Colonic mucosa (tissue), 4 donors: ENCODE measurements at regions of chr7 and their contacts with region 1.

Region 1: GRCh38 chr7:114539575-114539974 is 125.0 kb downstream of the FOXP2 start:
- DNase-seq: peak; percentile 21
- H3K4me3 ChIP-seq: no peak overlapping the region
- H3K27ac ChIP-seq: no peak overlapping the region
- H3K4me1 ChIP-seq: no peaks in the 10 kb centered on the region
- H3K27me3 ChIP-seq: no peaks in the 10 kb centered on the region
- CTCF ChIP-seq: no peak

Region 2: DNA sequence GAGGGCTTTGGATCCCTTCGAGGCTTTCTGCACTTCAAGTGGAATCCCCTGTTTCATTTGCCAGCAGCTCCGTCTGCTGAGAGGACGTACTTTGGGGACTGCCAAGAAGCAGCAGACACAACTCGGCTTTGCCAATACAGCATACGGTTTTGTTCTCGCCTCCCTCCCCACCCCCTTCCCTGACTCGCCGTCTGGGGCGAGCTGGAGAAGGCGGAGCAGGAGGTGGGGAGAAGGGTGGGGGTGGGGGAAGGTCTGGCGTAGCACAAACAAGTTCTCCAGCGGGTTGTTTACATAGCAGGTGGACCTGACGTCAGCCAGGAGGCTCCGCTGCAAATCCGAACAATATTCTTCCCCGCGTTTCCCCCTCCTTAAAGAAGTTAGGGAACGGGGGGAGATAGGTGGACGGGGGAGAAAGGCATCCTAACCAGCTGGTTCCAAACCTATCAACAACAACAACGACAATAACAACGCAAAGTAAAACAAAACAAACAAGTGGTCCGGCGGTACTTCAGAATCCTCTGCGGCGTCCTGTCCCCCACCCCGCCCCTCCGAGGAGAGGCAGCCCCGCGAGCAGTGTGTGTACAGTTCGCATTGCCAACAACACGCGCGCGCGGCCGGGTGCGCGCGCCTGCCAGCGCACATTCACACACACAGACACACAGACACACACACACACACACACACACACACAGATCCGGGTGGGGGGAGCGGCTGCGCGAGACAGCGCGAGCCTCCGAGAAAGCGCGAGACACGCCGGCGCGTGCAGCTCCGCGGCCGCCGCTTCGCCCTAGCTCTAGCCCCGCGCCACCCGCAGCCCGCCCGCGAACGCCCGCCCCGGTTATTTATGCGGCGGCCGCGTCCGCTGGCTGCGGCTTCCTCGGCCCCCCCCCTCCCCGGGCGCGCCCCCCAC is 453.7 kb before region 1 on chr7:
- intact Hi-C with region 1: loop called (anchors 10 kb)
- DNase-seq: peak; percentile 95
- H3K4me3 ChIP-seq: peak overlapping the region; percentile 56
- H3K27ac ChIP-seq: peak overlapping the region; percentile 91
- H3K4me1 ChIP-seq: no peaks in the 10 kb centered on the region
- H3K27me3 ChIP-seq: no peaks in the 10 kb centered on the region
- CTCF ChIP-seq: no peak

Region 3: GRCh38 chr7:114100810-114101209 is 438.8 kb before region 1 on chr7:
- intact Hi-C with region 1: no loop called
- DNase-seq: no peak
- H3K4me3 ChIP-seq: no peak overlapping the region
- H3K27ac ChIP-seq: no peak overlapping the region
- H3K4me1 ChIP-seq: no peaks in the 10 kb centered on the region
- H3K27me3 ChIP-seq: no peaks in the 10 kb centered on the region
- CTCF ChIP-seq: no peak